ENCODE measurements at regions of chr7 and their contacts with region 1.

Region 1: DNA sequence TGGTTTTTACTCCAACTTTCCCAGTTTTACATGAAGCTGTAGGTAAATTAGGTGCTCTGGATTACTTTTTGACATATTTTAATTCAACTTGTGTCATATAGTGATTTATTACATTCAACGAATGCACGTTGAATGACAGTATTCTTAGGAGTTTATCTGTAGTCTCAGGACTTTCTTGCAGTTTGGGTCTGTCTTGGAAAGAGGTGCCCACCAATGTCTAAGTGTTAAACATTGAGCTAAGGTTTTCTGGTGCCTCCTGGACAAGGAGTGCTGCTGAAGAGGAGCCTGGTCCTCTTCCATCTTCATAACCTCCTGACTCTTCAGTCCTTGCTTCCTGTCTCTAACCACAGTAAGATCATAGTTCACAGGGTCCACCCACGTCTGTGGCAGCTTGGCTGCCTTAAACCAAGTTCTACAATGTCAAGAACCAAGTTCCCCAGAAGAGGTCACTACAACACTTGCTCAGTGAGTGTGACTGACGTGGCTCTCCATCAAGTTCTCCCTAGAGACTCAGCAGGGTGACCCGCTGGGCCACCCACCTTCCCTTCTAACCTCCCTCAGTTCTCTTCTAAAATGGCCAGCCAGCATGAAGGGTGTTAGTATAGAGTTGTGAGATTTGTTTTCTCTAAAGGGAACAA is 6.1 kb downstream of the NPY start:
- DNase-seq: peak; percentile 81
- ATAC-seq: peak; percentile 99
- H3K4me3 Mint-ChIP-seq: no peak overlapping the region
- H3K27ac Mint-ChIP-seq: no peak overlapping the region
- H3K4me1 Mint-ChIP-seq: peaks cover 10% of the 10 kb centered on the region
- H3K27me3 Mint-ChIP-seq: peaks cover 32% of the 10 kb centered on the region

Region 2: GRCh38 chr7:24152356-24152755 is 137.8 kb before region 1 on chr7:
- CTCF ChIA-PET with region 1: no interaction called
- POLR2A ChIA-PET with region 1: no interaction called
- intact Hi-C with region 1: no loop called
- DNase-seq: no peak
- ATAC-seq: no peak
- H3K4me3 Mint-ChIP-seq: no peak overlapping the region
- H3K27ac Mint-ChIP-seq: no peak overlapping the region
- H3K4me1 Mint-ChIP-seq: no peaks in the 10 kb centered on the region
- H3K27me3 Mint-ChIP-seq: no peaks in the 10 kb centered on the region

Region 3: GRCh38 chr7:24381894-24382505 is 91.9 kb after region 1 on chr7:
- CTCF ChIA-PET with region 1: interaction called, 6 read pairs
- POLR2A ChIA-PET with region 1: no interaction called
- intact Hi-C with region 1: loop called (anchors 1 kb)
- DNase-seq: no peak
- ATAC-seq: peak; percentile 39
- H3K4me3 Mint-ChIP-seq: no peak overlapping the region
- H3K27ac Mint-ChIP-seq: no peak overlapping the region
- H3K4me1 Mint-ChIP-seq: no peaks in the 10 kb centered on the region
- H3K27me3 Mint-ChIP-seq: peaks cover 4% of the 10 kb centered on the region

Region 4: GRCh38 chr7:24572997-24573625 is 283.0 kb after region 1 on chr7 and contains the start of gene PALS2:
- CTCF ChIA-PET with region 1: no interaction called
- POLR2A ChIA-PET with region 1: no interaction called
- intact Hi-C with region 1: loop called (anchors 5 kb)
- DNase-seq: peak; percentile 86
- ATAC-seq: peak; percentile 68
- H3K4me3 Mint-ChIP-seq: peak within 1 kb of the TSS; percentile 88
- H3K27ac Mint-ChIP-seq: peak within 1 kb of the TSS; percentile 86
- H3K4me1 Mint-ChIP-seq: peaks cover 34% of the 10 kb centered on the region
- H3K27me3 Mint-ChIP-seq: peaks cover 12% of the 10 kb centered on the region
- total RNA-seq, gene PALS2: 20.8 to 41.7 TPM

Region 5: DNA sequence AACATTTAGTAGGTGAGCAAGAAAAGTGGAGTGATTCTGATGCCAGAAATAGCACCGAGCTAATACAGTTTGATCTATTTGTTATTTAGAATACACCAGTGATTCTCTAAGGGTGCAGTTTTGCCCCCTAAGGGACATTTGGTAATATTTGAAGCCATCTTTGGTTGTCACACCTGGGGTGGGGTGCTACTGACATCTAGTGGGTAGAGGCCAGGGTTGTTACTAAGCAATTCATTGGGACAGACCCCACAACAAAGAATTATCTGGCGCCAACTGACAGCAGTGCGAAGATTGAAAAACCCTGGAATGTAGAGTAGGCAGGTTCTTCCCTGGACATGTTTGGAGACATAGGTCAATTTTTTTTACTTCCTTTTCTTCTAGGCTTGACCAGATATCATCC is 297.7 kb after region 1 on chr7:
- CTCF ChIA-PET with region 1: no interaction called
- POLR2A ChIA-PET with region 1: no interaction called
- intact Hi-C with region 1: loop called (anchors 1 to 5 kb)
- DNase-seq: peak; percentile 64
- ATAC-seq: peak; percentile 64
- H3K4me3 Mint-ChIP-seq: no peak overlapping the region
- H3K27ac Mint-ChIP-seq: no peak overlapping the region
- H3K4me1 Mint-ChIP-seq: peaks cover 25% of the 10 kb centered on the region
- H3K27me3 Mint-ChIP-seq: no peaks in the 10 kb centered on the region

Region 6: GRCh38 chr7:24757353-24758275 is 467.5 kb after region 1 on chr7 and contains the start of gene GSDME:
- CTCF ChIA-PET with region 1: no interaction called
- POLR2A ChIA-PET with region 1: no interaction called
- intact Hi-C with region 1: loop called in 1 of 2 experiments (anchors 1 kb)
- DNase-seq: peak; percentile 62
- ATAC-seq: peak; percentile 52
- H3K4me3 Mint-ChIP-seq: peak within 1 kb of the TSS; percentile 78
- H3K27ac Mint-ChIP-seq: peak within 1 kb of the TSS; percentile 85
- H3K4me1 Mint-ChIP-seq: peaks cover 33% of the 10 kb centered on the region
- H3K27me3 Mint-ChIP-seq: peaks cover 39% of the 10 kb centered on the region
- total RNA-seq, gene GSDME: 6.2 to 8.5 TPM

Region 7: DNA sequence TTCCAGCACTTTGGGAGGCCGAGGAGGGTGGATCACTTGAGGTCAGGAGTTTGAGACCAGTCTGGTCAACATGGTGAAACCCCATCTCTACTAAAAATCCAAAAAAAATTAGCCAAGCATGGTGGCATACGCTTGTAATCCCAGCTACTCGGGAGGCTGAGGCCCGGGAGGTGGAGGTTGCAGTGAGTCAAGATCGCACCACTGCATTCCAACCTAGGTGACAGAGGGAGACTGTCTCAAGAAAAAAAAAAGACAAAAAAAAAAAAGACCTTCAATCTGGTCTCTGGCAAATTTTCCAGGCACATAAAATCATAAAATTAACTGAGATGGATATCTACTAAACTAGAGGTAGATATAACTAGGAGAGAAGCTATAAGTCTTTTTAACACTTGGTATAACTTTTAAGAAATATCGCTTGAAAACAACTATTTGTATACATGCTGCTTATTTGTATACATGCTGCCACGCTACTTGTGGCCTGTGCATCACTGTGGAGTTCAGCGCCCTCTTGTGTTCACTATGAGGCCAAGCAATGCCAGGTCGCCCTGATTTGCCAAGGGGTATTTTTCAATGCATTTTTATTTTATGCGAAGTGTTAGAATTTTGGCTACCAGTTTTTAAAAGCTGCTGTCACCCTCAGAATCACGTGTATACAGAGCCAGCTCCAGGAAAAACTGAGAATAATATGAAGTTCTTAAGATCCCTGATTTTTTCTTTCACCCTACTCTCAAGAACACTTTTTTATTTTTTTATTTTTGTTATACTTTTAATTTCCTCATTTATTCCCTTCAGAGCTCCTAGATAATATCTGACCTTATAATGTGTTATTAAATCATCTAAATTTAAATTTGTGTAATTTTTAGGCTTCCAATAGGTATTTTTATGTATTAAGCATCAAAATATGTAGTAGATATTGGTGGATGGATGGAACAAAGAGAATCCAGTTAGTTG is 808.2 kb after region 1 on chr7:
- CTCF ChIA-PET with region 1: no interaction called
- POLR2A ChIA-PET with region 1: no interaction called
- intact Hi-C with region 1: loop called (anchors 1 to 10 kb)
- DNase-seq: peak; percentile 76
- ATAC-seq: peak; percentile 81
- H3K4me3 Mint-ChIP-seq: no peak overlapping the region
- H3K27ac Mint-ChIP-seq: no peak overlapping the region
- H3K4me1 Mint-ChIP-seq: peaks cover 8% of the 10 kb centered on the region
- H3K27me3 Mint-ChIP-seq: peaks cover 2% of the 10 kb centered on the region